ENCODE measurements at regions of chr15 and their contacts with region 1.

Region 1: GRCh38 chr15:40038638-40039543 is at the start of gene SRP14:
- DNase-seq: peak; percentile 96
- H3K4me3 Mint-ChIP-seq: peak within 1 kb of the TSS; percentile 95
- H3K27ac Mint-ChIP-seq: peak within 1 kb of the TSS; percentile 95
- H3K4me1 Mint-ChIP-seq: peaks cover 49% of the 10 kb centered on the region
- H3K27me3 Mint-ChIP-seq: no peaks in the 10 kb centered on the region

Region 2: GRCh38 chr15:39887832-39888231 is 151.1 kb before region 1 on chr15:
- CTCF ChIA-PET with region 1: interaction called, 11 read pairs
- DNase-seq: peak; percentile 37
- H3K4me3 Mint-ChIP-seq: no peak overlapping the region
- H3K27ac Mint-ChIP-seq: no peak overlapping the region
- H3K4me1 Mint-ChIP-seq: no peaks in the 10 kb centered on the region
- H3K27me3 Mint-ChIP-seq: peaks cover 22% of the 10 kb centered on the region